ENCODE measurements at regions of chr3 and their contacts with region 1.

Region 1: GRCh38 chr3:197577366-197578074 is 21.8 kb upstream of the BDH1 start:
- DNase-seq: no peak
- H3K4me3 ChIP-seq: no peak overlapping the region
- H3K27ac ChIP-seq: no peak overlapping the region
- H3K4me1 ChIP-seq: peaks cover 8% of the 10 kb centered on the region
- H3K27me3 ChIP-seq: no peaks in the 10 kb centered on the region
- CTCF ChIP-seq: no peak

Region 2: GRCh38 chr3:197234947-197235914 is 342.3 kb before region 1 on chr3:
- CTCF ChIA-PET with region 1: no interaction called
- dilution Hi-C with region 1: loop called (anchors 5 kb)
- in situ Hi-C with region 1: no loop called
- intact Hi-C with region 1: no loop called
- DNase-seq: no peak
- H3K4me3 ChIP-seq: no peak overlapping the region
- H3K27ac ChIP-seq: no peak overlapping the region
- H3K4me1 ChIP-seq: no peaks in the 10 kb centered on the region
- H3K27me3 ChIP-seq: no peaks in the 10 kb centered on the region
- CTCF ChIP-seq: no peak

Region 3: DNA sequence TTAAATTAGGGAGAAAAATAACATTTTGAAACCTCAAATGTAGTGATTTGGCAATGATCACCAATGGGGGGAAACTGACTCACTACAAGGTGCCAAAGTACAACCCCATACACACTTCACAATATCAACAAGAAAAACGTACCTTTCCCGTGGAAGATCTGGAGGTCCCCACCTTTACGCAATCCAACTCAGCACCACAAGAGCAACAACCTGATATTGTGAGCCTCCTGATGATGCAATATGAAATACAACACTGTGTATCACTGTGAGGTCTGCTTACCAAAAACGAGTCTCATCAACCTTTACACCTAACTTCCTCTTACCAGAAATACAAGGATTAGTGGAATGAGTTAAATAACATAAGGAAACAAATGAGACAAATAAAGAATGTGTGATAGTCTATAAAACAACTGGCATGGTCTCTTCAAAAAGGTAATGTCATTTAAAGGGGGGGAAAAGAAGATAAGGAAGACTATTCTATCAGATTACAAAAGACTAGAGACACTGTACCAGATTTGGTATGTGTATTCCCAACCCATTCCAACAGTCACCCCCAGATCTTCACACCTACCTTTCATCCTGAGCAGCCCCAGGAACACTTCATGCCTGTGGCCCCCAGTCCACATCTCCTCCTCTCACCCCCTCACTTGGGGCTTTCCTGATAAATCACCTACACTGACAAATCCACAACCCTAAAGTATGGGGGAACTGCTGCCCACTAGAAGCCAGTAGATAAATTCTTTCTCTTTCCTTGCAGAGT is 306.8 kb before region 1 on chr3:
- CTCF ChIA-PET with region 1: no interaction called
- dilution Hi-C with region 1: no loop called
- in situ Hi-C with region 1: no loop called
- intact Hi-C with region 1: no loop called
- DNase-seq: no peak
- H3K4me3 ChIP-seq: no peak overlapping the region
- H3K27ac ChIP-seq: no peak overlapping the region
- H3K4me1 ChIP-seq: peaks cover 3% of the 10 kb centered on the region
- H3K27me3 ChIP-seq: no peaks in the 10 kb centered on the region
- CTCF ChIP-seq: no peak

Region 4: GRCh38 chr3:197478746-197479668 is 98.5 kb before region 1 on chr3:
- CTCF ChIA-PET with region 1: no interaction called
- dilution Hi-C with region 1: no loop called
- in situ Hi-C with region 1: no loop called
- intact Hi-C with region 1: no loop called
- DNase-seq: peak; percentile 81
- H3K4me3 ChIP-seq: no peak overlapping the region
- H3K27ac ChIP-seq: peak overlapping the region; percentile 72
- H3K4me1 ChIP-seq: peaks cover 32% of the 10 kb centered on the region
- H3K27me3 ChIP-seq: no peaks in the 10 kb centered on the region
- CTCF ChIP-seq: no peak

Region 5: GRCh38 chr3:197516517-197516889 is 61.0 kb before region 1 on chr3:
- CTCF ChIA-PET with region 1: no interaction called
- dilution Hi-C with region 1: loop called (anchors 10 kb)
- in situ Hi-C with region 1: no loop called
- intact Hi-C with region 1: no loop called
- DNase-seq: peak; percentile 98
- H3K4me3 ChIP-seq: no peak overlapping the region
- H3K27ac ChIP-seq: peak overlapping the region; percentile 65
- H3K4me1 ChIP-seq: peaks cover 32% of the 10 kb centered on the region
- H3K27me3 ChIP-seq: no peaks in the 10 kb centered on the region
- CTCF ChIP-seq: no peak

Region 6: GRCh38 chr3:197811343-197811742 is 233.8 kb after region 1 on chr3:
- CTCF ChIA-PET with region 1: no interaction called
- dilution Hi-C with region 1: no loop called
- in situ Hi-C with region 1: no loop called
- intact Hi-C with region 1: no loop called
- DNase-seq: peak; percentile 86
- H3K4me3 ChIP-seq: no peak overlapping the region
- H3K27ac ChIP-seq: no peak overlapping the region
- H3K4me1 ChIP-seq: peaks cover 8% of the 10 kb centered on the region
- H3K27me3 ChIP-seq: no peaks in the 10 kb centered on the region
- CTCF ChIP-seq: no peak

Measured in mammary epithelial cell (primary cell).